Posterior cingulate gyrus (tissue), 11 donors: ENCODE measurements at regions of chr15 and their contacts with region 1.

Region 1: GRCh38 chr15:101258238-101259144 is 6.6 kb upstream of the CHSY1 start:
- DNase-seq: peak in 8 of 10 donors; percentile 42 to 93 (median 70)

Region 2: DNA sequence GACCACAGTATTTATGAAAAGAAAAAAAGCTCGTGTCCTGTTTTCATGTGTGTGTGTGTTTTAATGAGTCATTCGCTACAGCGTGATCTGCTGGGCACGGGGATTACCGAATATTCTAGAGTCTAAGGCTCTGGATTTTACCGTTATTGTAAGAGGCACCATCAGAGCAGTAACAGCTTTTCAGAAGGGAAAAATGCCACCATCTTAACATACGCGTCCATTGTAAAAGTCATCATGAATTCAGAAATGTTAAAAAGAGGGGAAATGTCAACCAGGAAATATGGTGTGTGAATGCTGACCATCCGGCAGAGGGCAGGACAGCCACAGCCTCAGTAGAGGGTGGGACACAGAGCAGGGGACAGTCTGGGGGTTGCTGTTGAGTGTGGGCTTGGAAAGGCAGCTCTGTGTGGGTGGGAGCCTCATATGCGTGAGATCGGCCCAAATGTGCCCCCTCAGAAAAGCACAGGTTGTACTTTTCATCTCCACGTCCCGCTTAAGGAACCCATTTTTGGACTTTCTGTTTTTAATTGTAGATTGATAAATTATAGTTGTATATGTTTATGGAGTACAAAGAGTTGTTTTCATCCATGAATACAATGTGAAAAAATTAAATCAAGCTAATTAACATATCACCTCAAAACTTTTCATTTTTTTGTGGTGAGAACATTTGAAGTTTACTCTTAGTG is 586.5 kb before region 1 on chr15:
- intact Hi-C with region 1: no loop called
- DNase-seq: peak in 1 of 10 donors; percentile 73

Region 3: DNA sequence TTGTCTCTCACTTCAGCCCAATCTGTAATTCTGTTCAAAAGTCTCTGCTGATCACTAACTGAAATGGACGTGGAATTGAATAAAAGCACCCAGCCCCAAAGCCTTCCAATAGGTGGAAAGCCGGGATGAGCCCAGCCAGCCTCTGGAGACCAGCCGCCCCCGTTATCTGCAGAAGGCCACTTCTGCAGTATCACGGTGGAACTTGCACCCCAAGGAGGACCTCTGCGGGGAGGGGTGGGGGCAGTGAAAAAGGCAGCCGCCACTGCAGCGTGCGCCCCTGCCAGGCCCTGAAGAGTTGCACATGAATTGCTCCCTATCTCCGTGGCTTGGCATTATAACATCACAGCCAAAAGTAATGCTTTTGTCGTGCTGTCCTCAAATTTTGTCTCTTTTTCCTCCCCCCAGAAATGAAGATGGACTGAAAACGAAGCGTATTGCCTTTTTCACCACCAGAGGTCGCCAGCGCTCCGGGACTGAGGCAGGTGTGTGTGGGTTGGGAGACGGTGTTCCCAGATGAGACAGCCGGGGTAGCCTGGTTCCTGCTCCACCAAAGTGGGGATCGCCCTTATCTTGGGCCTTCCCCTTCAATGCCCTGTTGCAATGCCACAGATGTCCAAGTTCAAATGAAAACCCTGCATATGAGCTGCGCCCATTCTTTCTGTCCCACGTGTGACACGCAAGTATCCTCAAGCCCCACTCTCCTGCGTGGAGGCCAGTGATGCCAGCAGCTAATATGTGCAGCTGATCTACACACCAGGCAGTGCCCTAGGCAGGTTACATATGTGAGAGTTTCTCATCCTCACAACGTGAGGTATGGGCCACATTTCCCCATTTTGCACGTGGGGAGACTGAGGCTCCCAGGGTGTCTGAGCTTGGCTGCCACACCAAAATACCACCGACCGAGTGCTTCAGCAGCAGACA is 243.3 kb before region 1 on chr15:
- intact Hi-C with region 1: loop called (anchors 1 kb)
- DNase-seq: peak; percentile 52 to 96 (median 84)

Region 4: GRCh38 chr15:101088788-101089583 is 169.5 kb before region 1 on chr15:
- intact Hi-C with region 1: loop called (anchors 1 kb)
- DNase-seq: peak in 9 of 10 donors; percentile 42 to 95 (median 71)